Endothelial cell of umbilical vein (primary cell): ENCODE measurements at regions of chr18 and their contacts with region 1.

Region 1: GRCh38 chr18:74963820-74964446 is 245.0 kb downstream of the PTGR3 start:
- DNase-seq: peak; percentile 62
- H3K4me3 ChIP-seq: no peak overlapping the region
- H3K27ac ChIP-seq: no peak overlapping the region
- H3K4me1 ChIP-seq: no peaks in the 10 kb centered on the region
- H3K27me3 ChIP-seq: no peaks in the 10 kb centered on the region
- CTCF ChIP-seq: peak; percentile 19 to 45
- POLR2A ChIP-seq: no peak

Region 2: DNA sequence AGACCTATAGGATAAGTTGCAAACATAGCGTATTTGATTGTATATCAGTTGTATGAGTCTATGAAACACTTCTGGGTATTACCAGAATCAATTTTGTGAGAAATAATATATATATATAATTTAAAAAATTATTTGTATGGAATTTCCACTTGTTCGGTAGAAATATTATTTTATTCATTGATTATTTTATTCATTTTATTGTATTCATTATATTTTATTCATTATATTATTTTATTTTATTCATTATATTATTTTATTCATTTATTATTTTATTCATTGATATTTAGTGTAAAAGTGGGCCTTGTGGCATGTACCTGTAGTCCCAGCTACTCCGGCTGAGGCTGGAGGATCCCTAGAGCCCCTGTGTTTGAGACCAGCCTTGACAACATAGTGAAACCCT is 97.4 kb before region 1 on chr18:
- CTCF ChIA-PET with region 1: no interaction called
- POLR2A ChIA-PET with region 1: no interaction called
- dilution Hi-C with region 1: no loop called
- intact Hi-C with region 1: no loop called
- DNase-seq: no peak
- H3K4me3 ChIP-seq: no peak overlapping the region
- H3K27ac ChIP-seq: no peak overlapping the region
- H3K4me1 ChIP-seq: no peaks in the 10 kb centered on the region
- H3K27me3 ChIP-seq: no peaks in the 10 kb centered on the region
- CTCF ChIP-seq: no peak
- POLR2A ChIP-seq: no peak

Region 3: DNA sequence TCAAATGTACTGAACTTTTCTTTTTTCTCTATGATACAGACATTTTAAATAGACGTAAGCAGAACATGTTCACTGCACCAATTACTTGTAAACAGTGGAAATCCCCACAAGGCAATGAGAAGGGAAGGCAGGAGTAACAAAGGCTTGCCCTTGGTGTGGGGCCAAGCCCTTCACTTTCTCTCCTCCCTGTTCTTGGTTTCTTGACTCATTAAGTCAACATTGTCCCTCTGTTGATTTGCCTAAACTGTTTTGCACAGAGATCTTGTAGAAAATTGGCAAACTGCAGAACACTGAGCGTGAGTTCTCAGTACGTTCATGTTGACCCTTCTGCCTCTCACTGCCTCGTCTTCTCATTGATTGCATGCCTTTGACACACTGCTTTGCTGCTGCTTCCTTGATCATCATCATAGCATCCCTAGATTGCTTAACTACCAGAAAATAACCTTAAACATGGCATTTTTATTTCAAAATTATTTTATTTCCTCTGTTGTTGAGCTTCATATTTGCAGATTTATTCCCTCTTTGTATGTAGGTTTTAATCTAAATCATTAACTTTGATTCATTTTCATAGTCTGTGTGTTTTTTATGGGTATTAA is 12.7 kb before region 1 on chr18:
- CTCF ChIA-PET with region 1: interaction called, 10 read pairs
- POLR2A ChIA-PET with region 1: no interaction called
- dilution Hi-C with region 1: no loop called
- intact Hi-C with region 1: no loop called
- DNase-seq: peak; percentile 98
- H3K4me3 ChIP-seq: no peak overlapping the region
- H3K27ac ChIP-seq: peak overlapping the region; percentile 62
- H3K4me1 ChIP-seq: peaks cover 20% of the 10 kb centered on the region
- H3K27me3 ChIP-seq: no peaks in the 10 kb centered on the region
- CTCF ChIP-seq: no peak
- POLR2A ChIP-seq: no peak

Region 4: GRCh38 chr18:76349067-76349715 is 1385.3 kb after region 1 on chr18:
- CTCF ChIA-PET with region 1: no interaction called
- POLR2A ChIA-PET with region 1: no interaction called
- dilution Hi-C with region 1: no loop called
- intact Hi-C with region 1: loop called (anchors 5 kb)
- DNase-seq: peak; percentile 59
- H3K4me3 ChIP-seq: no peak overlapping the region
- H3K27ac ChIP-seq: no peak overlapping the region
- H3K4me1 ChIP-seq: no peaks in the 10 kb centered on the region
- H3K27me3 ChIP-seq: no peaks in the 10 kb centered on the region
- CTCF ChIP-seq: peak; percentile 79 to 83
- POLR2A ChIP-seq: no peak